ENCODE measurements at regions of chr19 and their contacts with region 1.

Region 1: DNA sequence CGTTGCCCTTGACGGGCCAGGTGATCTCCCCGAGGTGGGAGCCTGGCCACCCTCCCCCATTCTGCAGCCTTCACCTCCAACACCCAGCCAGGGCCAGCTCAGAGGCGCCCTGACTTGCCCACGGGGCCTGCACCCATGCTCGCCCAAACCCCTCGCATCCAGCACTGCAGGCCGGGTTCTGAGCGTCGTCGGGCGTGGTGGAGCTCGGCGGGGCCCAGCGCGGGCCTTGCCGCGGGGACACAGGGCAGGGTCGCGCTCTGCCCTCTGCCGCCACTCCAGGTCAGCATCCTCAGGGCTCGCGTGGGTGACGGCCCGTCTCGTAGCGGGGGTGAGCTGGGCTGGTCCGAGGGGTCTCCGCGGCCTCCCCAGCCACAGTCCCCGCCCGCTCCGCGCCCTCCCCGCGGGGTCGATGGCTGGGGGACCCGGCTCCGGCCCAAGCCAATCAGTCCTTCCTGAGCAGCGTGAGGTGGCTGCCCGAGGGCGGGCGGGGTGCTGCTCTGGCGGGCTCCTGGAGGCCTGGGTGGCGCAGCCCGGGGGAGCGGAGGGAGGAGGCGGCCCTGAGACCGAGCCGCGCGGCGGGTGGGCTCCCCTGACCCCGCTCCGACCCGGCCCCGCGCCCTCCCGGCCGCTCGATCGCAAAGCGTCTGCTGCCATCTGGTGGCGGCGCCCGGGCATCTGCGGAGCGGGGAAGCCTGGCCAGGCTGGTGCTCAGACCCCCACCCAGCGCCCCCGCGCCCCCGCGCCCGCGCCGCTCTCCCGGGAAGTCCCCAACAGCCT is 61.4 kb downstream of the CCNE1 start:
- DNase-seq: peak; percentile 61 to 83 (median 78)
- ATAC-seq: peak; percentile 92
- H3K4me3 ChIP-seq: peak overlapping the region; percentile 38
- H3K27ac ChIP-seq: no peak overlapping the region
- H3K4me1 ChIP-seq: peaks cover 7 to 22% of the 10 kb centered on the region in 2 experiments
- H3K27me3 ChIP-seq: peaks cover 6 to 18% of the 10 kb centered on the region in 2 experiments; a peak in 3 of 5 replicates
- CTCF ChIP-seq: peak; percentile 68 to 83 (median 71); a peak in 5 of 6 replicates
- EP300 ChIP-seq: no peak
- POLR2A ChIP-seq: no peak
- RAD21 ChIP-seq: peak; percentile 87 to 95

Region 2: GRCh38 chr19:29735800-29736199 is 137.4 kb before region 1 on chr19:
- CTCF ChIA-PET with region 1: interaction called, 7 read pairs
- POLR2A ChIA-PET with region 1: no interaction called
- in situ Hi-C with region 1: no loop called
- intact Hi-C with region 1: loop called (anchors 2 kb)
- DNase-seq: no peak
- ATAC-seq: no peak
- H3K4me3 ChIP-seq: no peak overlapping the region
- H3K27ac ChIP-seq: no peak overlapping the region
- H3K4me1 ChIP-seq: no peaks in the 10 kb centered on the region
- H3K27me3 ChIP-seq: peaks cover 53 to 62% of the 10 kb centered on the region in 2 experiments; a peak in 4 of 5 replicates
- CTCF ChIP-seq: no peak
- EP300 ChIP-seq: no peak
- POLR2A ChIP-seq: no peak
- RAD21 ChIP-seq: no peak

Region 3: DNA sequence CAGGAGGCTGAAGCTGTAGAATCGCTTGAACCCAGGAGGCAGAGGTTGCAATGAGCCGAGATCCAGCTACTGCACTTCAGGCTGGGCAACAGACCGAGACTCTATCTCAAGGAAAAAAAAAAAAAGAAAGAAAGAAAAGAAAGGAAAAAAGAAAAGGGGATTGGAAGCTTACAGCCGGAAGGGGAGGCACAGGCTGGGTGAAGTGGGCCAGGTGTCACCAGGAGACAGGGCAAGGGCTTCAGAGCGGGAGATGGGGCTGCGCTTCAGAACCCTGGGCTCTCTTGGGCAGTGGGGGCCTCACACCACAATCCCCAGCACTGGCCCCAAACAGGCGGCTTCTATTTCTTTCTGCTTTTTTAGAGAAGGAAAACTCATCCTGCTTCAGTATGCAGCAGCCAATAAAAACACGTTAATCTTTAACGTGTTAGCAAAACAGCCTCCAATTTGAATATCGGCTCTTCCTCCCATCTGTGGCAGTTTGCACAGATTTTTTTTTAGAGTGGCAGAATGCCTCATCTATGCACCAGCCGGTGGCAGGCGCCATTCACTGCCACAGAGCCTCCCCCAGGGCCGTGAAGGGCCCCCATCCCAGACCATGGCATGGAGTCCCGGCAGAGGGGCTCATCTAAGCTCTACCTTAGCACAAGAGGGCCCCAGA is 111.5 kb before region 1 on chr19:
- CTCF ChIA-PET with region 1: interaction called, 11 read pairs
- POLR2A ChIA-PET with region 1: interaction called, 4 read pairs
- in situ Hi-C with region 1: no loop called
- intact Hi-C with region 1: loop called (anchors 5 kb)
- DNase-seq: no peak
- ATAC-seq: no peak
- H3K4me3 ChIP-seq: no peak overlapping the region
- H3K27ac ChIP-seq: no peak overlapping the region
- H3K4me1 ChIP-seq: peaks cover 0 to 8% of the 10 kb centered on the region in 2 experiments; a peak in 1 of 5 replicates
- H3K27me3 ChIP-seq: peaks cover 21 to 61% of the 10 kb centered on the region in 2 experiments
- CTCF ChIP-seq: no peak
- EP300 ChIP-seq: no peak
- POLR2A ChIP-seq: no peak
- RAD21 ChIP-seq: no peak

Region 4: GRCh38 chr19:29771708-29772414 is 101.4 kb before region 1 on chr19:
- CTCF ChIA-PET with region 1: interaction called, 18 read pairs
- POLR2A ChIA-PET with region 1: no interaction called
- in situ Hi-C with region 1: loop called (anchors 5 kb)
- intact Hi-C with region 1: no loop called
- DNase-seq: peak; percentile 74 to 79 (median 78)
- ATAC-seq: peak; percentile 96
- H3K4me3 ChIP-seq: no peak overlapping the region
- H3K27ac ChIP-seq: no peak overlapping the region
- H3K4me1 ChIP-seq: peaks cover 0 to 4% of the 10 kb centered on the region in 2 experiments; a peak in 2 of 5 replicates
- H3K27me3 ChIP-seq: peaks cover 2 to 53% of the 10 kb centered on the region in 2 experiments
- CTCF ChIP-seq: peak; percentile 80 to 88 (median 84)
- EP300 ChIP-seq: no peak
- POLR2A ChIP-seq: no peak
- RAD21 ChIP-seq: peak; percentile 45 to 75

Measured in K562 (cell line).